ENCODE measurements at regions of chr4 and their contacts with region 1.

Region 1: GRCh38 chr4:80989921-80990544 is 40.5 kb upstream of the BMP3 start:
- DNase-seq: no peak
- H3K4me3 ChIP-seq: no peak overlapping the region
- H3K27ac ChIP-seq: no peak overlapping the region
- H3K4me1 ChIP-seq: no peaks in the 10 kb centered on the region
- H3K27me3 ChIP-seq: no peaks in the 10 kb centered on the region
- CTCF ChIP-seq: peak; percentile 49 to 63 (median 55)
- POLR2A ChIP-seq: no peak

Region 2: DNA sequence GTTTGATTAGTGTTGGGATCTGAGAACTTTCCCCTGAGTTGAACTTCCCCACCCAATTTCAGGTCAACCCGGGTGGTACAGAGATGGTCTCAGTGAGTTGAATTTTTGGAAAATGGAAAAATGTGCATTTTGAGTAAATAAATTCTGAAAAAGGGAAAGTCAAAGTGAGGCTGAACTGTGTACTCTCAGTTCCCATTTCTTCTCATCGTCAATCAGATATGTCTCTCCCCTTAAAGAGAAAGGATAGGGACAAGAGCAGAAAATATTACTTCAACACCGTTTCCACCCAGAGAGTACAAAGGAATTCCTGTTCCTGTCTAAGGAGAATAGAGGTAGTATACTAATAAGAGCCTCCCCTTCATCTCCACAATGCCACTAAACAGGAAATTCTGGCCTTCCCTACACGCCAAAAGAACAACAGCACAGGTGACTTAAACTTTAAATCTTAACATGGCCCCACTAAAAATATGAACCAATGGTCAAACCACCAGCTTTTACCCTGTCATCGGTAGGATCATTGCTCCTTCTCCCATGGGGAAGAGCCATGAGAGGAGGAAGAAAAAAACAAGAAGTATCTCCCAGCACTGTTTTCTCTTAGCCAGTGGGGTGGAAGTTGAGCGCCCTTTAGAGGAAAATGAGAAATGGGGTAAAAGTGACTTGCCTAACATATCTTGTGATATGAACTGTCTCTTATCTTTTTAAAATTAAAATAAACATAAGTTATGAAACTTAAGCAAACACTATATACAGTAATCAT is 70.7 kb after region 1 on chr4:
- intact Hi-C with region 1: loop called (anchors 2 kb)
- DNase-seq: no peak
- H3K4me3 ChIP-seq: no peak overlapping the region
- H3K27ac ChIP-seq: no peak overlapping the region
- H3K4me1 ChIP-seq: no peaks in the 10 kb centered on the region
- H3K27me3 ChIP-seq: no peaks in the 10 kb centered on the region
- CTCF ChIP-seq: no peak
- POLR2A ChIP-seq: no peak